Uterus (tissue), 4 donors: ENCODE measurements at regions of chr3 and their contacts with region 1.

Region 1: GRCh38 chr3:184133840-184134731 is 1.1 kb upstream of the EIF2B5 start:
- DNase-seq: peak; percentile 82 to 83
- H3K4me3 ChIP-seq: peak overlapping the region; percentile 67 to 93
- H3K27ac ChIP-seq: peak overlapping the region; percentile 86 to 94
- H3K4me1 ChIP-seq: no peaks in the 10 kb centered on the region
- H3K27me3 ChIP-seq: no peaks in the 10 kb centered on the region
- CTCF ChIP-seq: peak in 1 of 4 experiments; percentile 17
- POLR2A ChIP-seq: peak in 1 of 2 donors; percentile 25

Region 2: GRCh38 chr3:184171562-184172287 is 37.6 kb after region 1 on chr3:
- intact Hi-C with region 1: no loop called
- DNase-seq: no peak
- H3K4me3 ChIP-seq: no peak overlapping the region
- H3K27ac ChIP-seq: peak overlapping the region in 1 of 2 donors; percentile 7
- H3K4me1 ChIP-seq: peaks cover 0 to 6% of the 10 kb centered on the region in 2 donors
- H3K27me3 ChIP-seq: no peaks in the 10 kb centered on the region
- CTCF ChIP-seq: no peak
- POLR2A ChIP-seq: no peak

Region 3: DNA sequence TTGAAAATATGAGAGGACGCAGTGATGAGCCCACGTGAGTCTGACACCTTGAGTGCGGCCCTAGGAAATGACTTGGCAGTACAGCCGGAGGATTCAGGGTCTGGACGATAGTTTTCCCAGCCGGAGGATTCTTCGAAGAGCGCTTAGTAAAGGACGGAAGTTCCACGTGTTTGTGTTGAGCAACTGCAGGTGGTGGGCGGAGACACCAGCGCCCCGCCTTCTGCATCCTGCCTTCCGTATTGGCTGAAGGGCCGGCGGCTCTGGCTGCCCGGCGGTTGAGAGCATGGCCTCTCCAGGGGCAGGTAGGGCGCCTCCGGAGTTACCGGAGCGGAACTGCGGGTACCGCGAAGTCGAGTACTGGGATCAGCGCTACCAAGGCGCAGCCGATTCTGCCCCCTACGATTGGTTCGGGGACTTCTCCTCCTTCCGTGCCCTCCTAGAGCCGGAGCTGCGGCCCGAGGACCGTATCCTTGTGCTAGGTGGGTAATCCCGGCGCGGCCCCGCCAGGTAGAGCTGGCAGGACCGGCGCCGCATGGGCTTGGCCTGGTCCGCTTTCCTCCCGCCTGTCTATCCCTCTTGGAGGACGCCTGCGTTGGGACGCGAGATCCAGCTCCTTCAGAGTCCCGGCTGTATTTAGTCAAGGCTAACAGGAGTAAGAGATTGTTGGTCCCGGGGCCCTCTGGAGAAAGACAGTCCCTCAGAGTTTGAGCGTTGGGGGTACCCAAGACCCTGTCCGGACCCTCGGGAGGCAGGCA is 115.5 kb after region 1 on chr3 and contains the start of gene EEF1AKMT4:
- intact Hi-C with region 1: loop called (anchors 5 kb)
- DNase-seq: peak; percentile 96
- H3K4me3 ChIP-seq: peak within 1 kb of the TSS; percentile 76 to 97
- H3K27ac ChIP-seq: peak within 1 kb of the TSS; percentile 79 to 84
- H3K4me1 ChIP-seq: no peaks in the 10 kb centered on the region
- H3K27me3 ChIP-seq: no peaks in the 10 kb centered on the region
- CTCF ChIP-seq: peak; percentile 40 to 63 (median 48)
- POLR2A ChIP-seq: no peak
- total RNA-seq, gene EEF1AKMT4: 0.51 to 4.7 (median 2.2) TPM

Region 4: DNA sequence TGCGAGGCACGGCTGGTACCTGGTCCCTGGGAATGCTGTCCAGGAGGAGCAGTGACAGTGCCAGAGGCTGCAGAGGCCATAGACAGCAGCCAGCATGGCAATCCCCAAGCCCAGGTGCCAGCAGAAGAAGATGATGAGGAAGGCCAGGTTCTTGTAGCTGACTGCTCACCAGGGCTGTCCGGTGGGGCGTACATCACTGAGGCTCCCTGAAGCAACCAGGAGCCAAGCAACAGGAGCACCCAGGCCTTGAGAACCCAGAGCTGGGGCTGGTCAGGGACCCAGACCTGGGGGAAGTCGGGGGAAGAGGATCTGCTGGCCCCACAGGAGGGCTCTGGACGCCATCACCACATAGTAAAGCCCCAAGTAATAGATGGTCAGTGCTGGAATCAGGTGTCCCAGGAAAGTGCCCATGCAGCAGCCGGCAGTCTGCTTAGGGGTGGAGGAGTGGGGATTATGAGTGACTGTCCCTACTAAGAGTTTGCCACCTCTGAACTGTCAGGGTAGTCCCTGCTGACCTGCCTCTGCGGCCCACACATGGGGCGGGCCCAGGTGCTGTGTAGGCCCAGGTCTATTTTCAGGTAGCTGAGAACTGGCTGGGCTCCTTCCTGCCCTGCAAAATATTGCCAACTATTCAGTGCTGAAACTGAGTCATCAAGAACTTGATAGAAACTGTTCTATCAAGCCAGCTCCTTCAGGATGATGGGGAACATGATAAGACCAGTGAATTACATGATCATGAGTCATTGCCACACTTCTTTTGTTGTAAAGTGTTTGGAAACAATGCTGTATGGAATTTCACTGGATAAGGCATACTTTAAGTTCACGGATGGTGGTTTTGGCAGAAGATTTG is 314.4 kb after region 1 on chr3:
- intact Hi-C with region 1: no loop called
- DNase-seq: no peak
- H3K4me3 ChIP-seq: no peak overlapping the region
- H3K27ac ChIP-seq: peak overlapping the region in 1 of 2 donors; percentile 21
- H3K4me1 ChIP-seq: no peaks in the 10 kb centered on the region
- H3K27me3 ChIP-seq: no peaks in the 10 kb centered on the region
- CTCF ChIP-seq: no peak
- POLR2A ChIP-seq: no peak